Common myeloid progenitor, CD34-positive (primary cell): ENCODE measurements at regions of chr18 and their contacts with region 1.

Region 1: GRCh38 chr18:58117786-58118403 is 73.9 kb downstream of the NEDD4L start:
- DNase-seq: peak; percentile 92 to 96 (median 93)
- H3K4me3 ChIP-seq: no peak overlapping the region
- H3K27ac ChIP-seq: no peak overlapping the region
- H3K4me1 ChIP-seq: peaks cover 0 to 15% (median 8%) of the 10 kb centered on the region in 4 experiments
- H3K27me3 ChIP-seq: no peaks in the 10 kb centered on the region

Region 2: DNA sequence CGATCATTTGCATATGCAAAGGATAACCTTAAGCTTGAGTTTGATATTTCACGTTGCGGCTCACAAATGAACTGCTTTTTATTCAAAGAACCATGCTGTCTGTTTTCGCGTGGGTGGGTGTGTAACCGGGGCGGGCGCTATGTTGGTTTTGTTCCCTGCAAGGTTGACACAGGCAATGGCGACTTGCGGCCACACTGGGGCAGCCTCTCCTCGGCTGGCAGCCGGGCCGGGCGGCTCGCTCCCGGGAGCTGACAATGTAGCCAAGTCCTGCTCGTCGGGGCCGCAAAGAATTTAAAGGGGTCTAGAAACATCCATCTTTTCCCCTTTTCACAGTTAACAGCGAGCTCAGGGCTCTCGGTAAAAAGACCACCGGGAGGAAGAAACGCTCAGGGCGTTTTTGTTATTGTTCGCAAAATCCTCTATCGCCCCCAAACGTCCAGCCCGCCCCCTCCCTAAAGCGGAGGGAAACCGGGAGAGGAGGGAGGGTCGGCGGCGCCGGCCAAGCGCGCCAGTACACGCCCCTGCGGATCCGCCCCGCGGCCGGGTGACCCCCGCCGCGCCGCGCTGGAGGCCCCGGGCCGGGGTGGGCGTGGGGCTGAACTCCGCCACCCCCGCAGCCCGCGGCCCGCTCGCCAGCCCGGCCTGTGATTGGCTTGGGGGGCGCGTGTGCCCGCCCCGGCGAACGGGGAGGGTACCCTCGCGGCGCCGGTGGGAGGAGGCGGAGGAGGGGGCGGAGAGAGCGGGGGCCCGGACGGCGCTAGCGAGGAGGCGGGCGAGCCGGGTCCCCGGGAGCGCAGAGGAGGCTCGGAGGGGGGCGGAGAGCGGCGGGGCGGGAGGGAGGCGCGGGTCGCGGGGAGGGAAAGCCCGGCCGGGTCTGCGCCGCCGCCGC is 74.2 kb before region 1 on chr18 and contains the start of gene NEDD4L:
- CTCF ChIA-PET with region 1: interaction called, 27 read pairs
- POLR2A ChIA-PET with region 1: interaction called, 3 read pairs
- DNase-seq: peak; percentile 88 to 94 (median 93)
- H3K4me3 ChIP-seq: peak within 1 kb of the TSS; percentile 70 to 96 (median 85)
- H3K27ac ChIP-seq: peak within 1 kb of the TSS in 1 of 2 experiments; percentile 74
- H3K4me1 ChIP-seq: peaks cover 2 to 25% (median 21%) of the 10 kb centered on the region in 4 experiments
- H3K27me3 ChIP-seq: no peaks in the 10 kb centered on the region

Region 3: GRCh38 chr18:58051765-58052460 is 66.0 kb before region 1 on chr18:
- CTCF ChIA-PET with region 1: interaction called, 37 read pairs
- POLR2A ChIA-PET with region 1: no interaction called
- DNase-seq: peak; percentile 43 to 63 (median 62)
- H3K4me3 ChIP-seq: no peak overlapping the region
- H3K27ac ChIP-seq: no peak overlapping the region
- H3K4me1 ChIP-seq: peaks cover 0 to 6% (median 4%) of the 10 kb centered on the region in 4 experiments
- H3K27me3 ChIP-seq: no peaks in the 10 kb centered on the region

Region 4: DNA sequence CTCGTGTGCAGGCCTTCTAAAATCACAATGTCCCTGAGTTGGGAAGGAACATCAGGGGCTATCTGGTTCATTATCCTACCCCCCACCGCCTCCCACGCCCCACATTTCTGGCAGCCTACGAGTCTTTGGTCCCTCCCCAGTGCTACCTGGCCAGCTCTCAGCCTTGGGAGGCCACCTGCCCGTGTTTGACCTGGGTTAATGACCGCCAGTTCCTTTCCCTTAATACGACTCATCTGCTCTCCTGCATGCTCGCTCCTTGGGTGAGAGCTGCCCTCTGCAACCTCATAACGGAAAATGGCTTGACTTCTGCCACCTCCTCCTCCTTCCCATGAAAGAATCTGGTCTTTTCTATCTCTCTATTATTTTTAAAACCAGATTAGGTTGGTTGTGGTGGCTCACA is 38.6 kb after region 1 on chr18:
- CTCF ChIA-PET with region 1: no interaction called
- POLR2A ChIA-PET with region 1: no interaction called
- DNase-seq: no peak
- H3K4me3 ChIP-seq: no peak overlapping the region
- H3K27ac ChIP-seq: no peak overlapping the region
- H3K4me1 ChIP-seq: peaks cover 0 to 4% (median 0%) of the 10 kb centered on the region in 4 experiments
- H3K27me3 ChIP-seq: no peaks in the 10 kb centered on the region

Region 5: DNA sequence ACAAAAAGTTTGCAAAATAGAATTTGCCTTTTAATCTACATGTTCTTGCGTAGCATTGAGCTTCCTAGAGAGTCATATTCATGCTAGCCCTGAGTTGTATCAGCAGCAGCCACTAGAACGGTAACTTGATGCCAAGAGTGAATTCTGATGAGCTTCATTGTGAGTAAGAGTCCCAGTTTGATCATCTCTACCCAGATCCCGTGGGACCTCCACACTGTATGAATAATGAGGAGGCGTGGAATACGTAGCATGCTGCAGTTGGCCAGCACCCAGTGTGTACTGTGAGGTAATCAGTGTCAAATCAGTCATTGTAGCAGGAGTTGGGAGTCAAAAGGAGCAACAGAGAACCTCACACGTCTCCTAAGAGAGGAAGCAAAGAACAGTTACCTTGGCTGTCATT is 124.0 kb after region 1 on chr18:
- CTCF ChIA-PET with region 1: no interaction called
- POLR2A ChIA-PET with region 1: no interaction called
- DNase-seq: no peak
- H3K4me3 ChIP-seq: no peak overlapping the region
- H3K27ac ChIP-seq: no peak overlapping the region
- H3K4me1 ChIP-seq: no peaks in the 10 kb centered on the region
- H3K27me3 ChIP-seq: no peaks in the 10 kb centered on the region